Endothelial cell of umbilical vein (primary cell): ENCODE measurements at regions of chr15 and their contacts with region 1.

Region 1: GRCh38 chr15:62306851-62307504 is 141.9 kb upstream of the C2CD4B start:
- DNase-seq: peak; percentile 70
- H3K4me3 ChIP-seq: no peak overlapping the region
- H3K27ac ChIP-seq: no peak overlapping the region
- H3K4me1 ChIP-seq: peaks cover 3% of the 10 kb centered on the region
- H3K27me3 ChIP-seq: peaks cover 4 to 6% of the 10 kb centered on the region in 2 experiments
- CTCF ChIP-seq: peak; percentile 57 to 61
- POLR2A ChIP-seq: no peak

Region 2: GRCh38 chr15:61879219-61879618 is 427.8 kb before region 1 on chr15:
- CTCF ChIA-PET with region 1: interaction called, 42 read pairs
- POLR2A ChIA-PET with region 1: no interaction called
- dilution Hi-C with region 1: no loop called
- intact Hi-C with region 1: no loop called
- DNase-seq: peak; percentile 49
- H3K4me3 ChIP-seq: no peak overlapping the region
- H3K27ac ChIP-seq: no peak overlapping the region
- H3K4me1 ChIP-seq: peaks cover 19% of the 10 kb centered on the region
- H3K27me3 ChIP-seq: no peaks in the 10 kb centered on the region
- CTCF ChIP-seq: no peak
- POLR2A ChIP-seq: no peak

Region 3: GRCh38 chr15:62066663-62067447 is 240.1 kb before region 1 on chr15 and contains the start of gene C2CD4A:
- CTCF ChIA-PET with region 1: interaction called, 15 read pairs
- POLR2A ChIA-PET with region 1: no interaction called
- dilution Hi-C with region 1: no loop called
- intact Hi-C with region 1: loop called (anchors 1 kb)
- DNase-seq: peak; percentile 81
- H3K4me3 ChIP-seq: peak within 1 kb of the TSS; percentile 37 to 44 (median 38)
- H3K27ac ChIP-seq: no peak within 1 kb of the TSS
- H3K4me1 ChIP-seq: peaks cover 31% of the 10 kb centered on the region
- H3K27me3 ChIP-seq: no peaks in the 10 kb centered on the region
- CTCF ChIP-seq: peak in 1 of 2 donors; percentile 43
- POLR2A ChIP-seq: no peak
- total RNA-seq, gene C2CD4A: 0.46 and 1.1 TPM in 2 replicates

Region 4: GRCh38 chr15:62165104-62165792 is 141.7 kb before region 1 on chr15 and contains the start of gene C2CD4B:
- CTCF ChIA-PET with region 1: no interaction called
- POLR2A ChIA-PET with region 1: interaction called, 3 read pairs
- dilution Hi-C with region 1: no loop called
- intact Hi-C with region 1: loop called (anchors 5 kb)
- DNase-seq: peak; percentile 89
- H3K4me3 ChIP-seq: peak within 1 kb of the TSS; percentile 49 to 75 (median 66)
- H3K27ac ChIP-seq: peak within 1 kb of the TSS; percentile 78
- H3K4me1 ChIP-seq: peaks cover 31% of the 10 kb centered on the region
- H3K27me3 ChIP-seq: no peaks in the 10 kb centered on the region
- CTCF ChIP-seq: peak in 1 of 2 donors; percentile 19
- POLR2A ChIP-seq: peak; percentile 90
- total RNA-seq, gene C2CD4B: 28.4 and 31.7 TPM in 2 replicates

Region 5: DNA sequence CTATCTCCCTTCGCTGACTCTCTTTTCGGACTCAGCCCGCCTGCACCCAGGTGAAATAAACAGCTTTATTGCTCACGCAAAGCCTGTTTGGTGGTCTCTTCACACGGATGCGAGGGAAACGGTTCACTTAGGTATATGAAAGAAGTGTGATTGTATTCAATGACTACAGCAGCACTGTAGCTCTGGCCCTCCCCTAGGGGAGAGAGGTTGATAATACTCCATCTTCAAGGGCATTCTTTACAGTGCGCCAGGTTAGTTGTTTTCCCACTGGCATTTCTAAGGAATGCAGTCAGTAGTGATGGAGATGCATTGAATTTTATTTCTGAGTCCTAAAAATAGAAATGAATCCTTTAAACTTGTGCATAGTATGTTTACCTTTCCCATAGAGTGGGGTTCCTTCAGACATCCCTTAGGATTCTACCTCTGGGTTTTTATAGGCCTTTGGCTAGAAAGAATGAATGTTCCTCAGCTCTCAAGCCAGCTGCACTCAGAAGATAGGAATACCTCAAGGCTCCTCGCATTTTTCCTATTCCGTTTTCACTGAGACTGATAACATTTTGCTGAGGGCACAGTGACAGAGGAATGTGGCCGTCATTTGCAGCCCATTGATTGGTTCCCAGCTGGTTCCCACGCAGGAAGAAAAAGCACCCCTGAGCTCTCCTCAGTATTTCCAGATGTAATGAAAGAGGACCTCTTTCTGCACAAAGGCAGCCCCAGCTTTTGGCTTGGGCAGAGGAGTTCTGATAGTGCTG is 10.0 kb before region 1 on chr15:
- CTCF ChIA-PET with region 1: interaction called, 14 read pairs
- POLR2A ChIA-PET with region 1: no interaction called
- dilution Hi-C with region 1: no loop called
- intact Hi-C with region 1: no loop called
- DNase-seq: no peak
- H3K4me3 ChIP-seq: no peak overlapping the region
- H3K27ac ChIP-seq: no peak overlapping the region
- H3K4me1 ChIP-seq: no peaks in the 10 kb centered on the region
- H3K27me3 ChIP-seq: peaks cover 5 to 7% of the 10 kb centered on the region in 2 experiments
- CTCF ChIP-seq: no peak
- POLR2A ChIP-seq: no peak

Region 6: DNA sequence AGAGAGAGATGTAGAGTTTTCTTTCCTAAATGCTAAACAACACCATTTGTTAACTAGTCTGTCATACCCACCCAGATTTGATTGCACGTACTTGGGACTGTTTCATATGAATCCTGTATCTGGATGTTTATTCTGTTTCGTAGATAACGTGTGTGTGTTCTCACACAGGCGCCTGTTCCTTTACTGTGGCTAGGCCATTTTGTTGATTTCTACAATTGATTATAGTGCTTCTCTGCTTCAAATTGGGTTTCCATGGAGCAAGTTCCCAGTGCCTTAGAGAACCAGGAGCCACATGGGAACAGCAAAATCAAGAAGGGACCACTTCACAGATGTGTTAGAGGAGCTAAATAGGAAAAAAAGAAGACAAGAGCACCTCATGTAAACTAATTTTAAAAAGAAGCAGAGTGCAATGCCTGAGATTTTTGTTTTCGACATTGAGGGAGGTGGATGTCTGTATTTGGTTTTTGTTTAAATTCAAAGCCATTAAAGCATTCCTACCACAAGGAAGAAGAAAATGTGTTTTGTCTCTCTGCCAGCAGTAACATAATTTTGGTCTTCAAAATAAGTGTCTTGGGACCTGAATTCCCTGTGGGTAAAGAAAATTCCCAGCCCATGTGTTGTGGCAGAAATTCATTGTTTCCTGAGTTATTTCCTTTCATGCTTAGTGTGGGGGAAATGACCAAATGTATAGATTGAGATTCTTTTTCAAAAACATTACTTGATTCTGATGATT is 282.1 kb after region 1 on chr15:
- CTCF ChIA-PET with region 1: no interaction called
- POLR2A ChIA-PET with region 1: no interaction called
- dilution Hi-C with region 1: no loop called
- intact Hi-C with region 1: no loop called
- DNase-seq: peak; percentile 36
- H3K4me3 ChIP-seq: no peak overlapping the region
- H3K27ac ChIP-seq: no peak overlapping the region
- H3K4me1 ChIP-seq: no peaks in the 10 kb centered on the region
- H3K27me3 ChIP-seq: peaks cover 0 to 2% of the 10 kb centered on the region in 2 experiments
- CTCF ChIP-seq: no peak
- POLR2A ChIP-seq: no peak